Panc1 (cell line): ENCODE measurements at regions of chr5 and their contacts with region 1.

Region 1: DNA sequence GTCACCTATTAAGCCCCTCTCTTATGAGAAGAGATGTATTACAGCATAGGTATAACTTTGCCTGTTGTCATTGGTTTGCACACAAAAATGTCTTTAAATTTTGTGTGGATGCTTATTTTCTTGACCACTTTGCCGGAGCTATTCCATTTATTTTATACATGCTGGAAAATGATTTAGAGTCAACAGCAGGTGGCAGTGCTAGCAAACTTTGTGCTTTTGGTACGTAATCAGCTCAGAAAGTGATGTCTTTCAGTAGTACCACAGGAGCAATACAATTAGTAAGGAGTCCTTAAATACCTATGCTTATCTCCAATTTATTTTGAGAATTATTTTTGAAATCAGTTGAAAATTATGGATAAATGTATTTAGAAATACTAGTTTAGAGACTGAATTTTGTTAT is 19.8 kb upstream of the NUDT12 start:
- DNase-seq: no peak
- ATAC-seq: no peak
- H3K4me3 ChIP-seq: no peak overlapping the region
- H3K27ac ChIP-seq: no peak overlapping the region
- H3K4me1 ChIP-seq: no peaks in the 10 kb centered on the region
- H3K27me3 ChIP-seq: peaks cover 6% of the 10 kb centered on the region
- CTCF ChIP-seq: peak; percentile 59; the same call in 1 of the 2 replicates

Region 2: DNA sequence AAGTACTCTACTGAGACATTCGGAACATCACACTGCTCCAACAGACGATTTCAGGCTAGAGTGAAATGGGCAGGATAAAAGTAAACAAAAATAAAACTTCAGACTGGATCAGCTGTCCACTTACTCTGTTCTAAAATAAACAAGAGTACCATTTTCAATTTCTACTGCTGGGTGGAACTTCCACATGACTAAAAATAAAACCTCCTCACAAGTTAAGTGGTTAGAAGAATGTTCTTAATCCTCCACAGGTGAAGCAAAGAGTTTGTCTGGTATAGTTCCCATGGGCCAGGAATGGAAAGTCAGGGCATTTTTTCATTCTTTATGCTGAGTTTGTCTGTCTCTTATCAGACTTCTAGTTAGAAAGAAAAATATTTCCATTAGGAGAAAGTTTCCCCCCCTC is 35.5 kb before region 1 on chr5:
- CTCF ChIA-PET with region 1: no interaction called
- POLR2A ChIA-PET with region 1: no interaction called
- in situ Hi-C with region 1: no loop called
- intact Hi-C with region 1: no loop called
- DNase-seq: no peak
- ATAC-seq: no peak
- H3K4me3 ChIP-seq: no peak overlapping the region
- H3K27ac ChIP-seq: no peak overlapping the region
- H3K4me1 ChIP-seq: no peaks in the 10 kb centered on the region
- H3K27me3 ChIP-seq: no peaks in the 10 kb centered on the region
- CTCF ChIP-seq: no peak

Region 3: DNA sequence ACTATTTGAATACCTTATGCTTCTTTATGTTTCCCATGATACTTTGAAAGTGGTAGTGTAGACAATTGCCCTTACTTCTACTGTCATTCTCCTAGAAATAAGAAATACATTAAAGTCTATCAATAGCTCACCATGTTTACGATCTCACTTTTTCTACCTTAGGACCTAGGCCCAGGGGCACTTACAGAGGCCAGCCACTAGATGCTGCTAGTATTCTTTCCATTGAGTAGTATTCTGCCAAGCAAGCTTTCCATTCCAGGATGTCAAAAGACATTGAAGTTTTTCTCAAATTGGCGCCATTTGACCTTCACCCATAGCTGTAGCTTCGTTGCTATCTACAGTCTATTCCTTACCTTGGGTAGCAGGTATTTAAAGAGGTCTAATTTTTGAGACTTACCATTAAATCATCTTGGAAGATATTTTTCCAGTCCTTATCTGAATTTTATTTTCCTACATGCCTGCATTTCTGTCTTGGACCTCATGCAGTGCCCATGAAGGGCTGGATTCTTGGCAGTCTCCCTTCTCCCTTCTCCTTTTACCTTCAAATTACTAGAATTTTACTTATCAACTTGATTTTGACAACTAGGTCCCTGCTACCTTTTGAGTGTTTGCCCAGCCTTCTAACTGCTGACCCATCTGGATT is 226.2 kb after region 1 on chr5:
- CTCF ChIA-PET with region 1: interaction called, 5 read pairs
- POLR2A ChIA-PET with region 1: no interaction called
- in situ Hi-C with region 1: no loop called
- intact Hi-C with region 1: loop called (anchors 10 kb)
- DNase-seq: peak; percentile 46
- ATAC-seq: peak; percentile 94
- H3K4me3 ChIP-seq: no peak overlapping the region
- H3K27ac ChIP-seq: peak overlapping the region; percentile 44; the same call in 1 of the 2 replicates
- H3K4me1 ChIP-seq: peaks cover 2% of the 10 kb centered on the region; the same call in 1 of the 2 replicates
- H3K27me3 ChIP-seq: no peaks in the 10 kb centered on the region
- CTCF ChIP-seq: peak; percentile 94